ENCODE measurements at regions of chr7 and their contacts with region 1.

Region 1: DNA sequence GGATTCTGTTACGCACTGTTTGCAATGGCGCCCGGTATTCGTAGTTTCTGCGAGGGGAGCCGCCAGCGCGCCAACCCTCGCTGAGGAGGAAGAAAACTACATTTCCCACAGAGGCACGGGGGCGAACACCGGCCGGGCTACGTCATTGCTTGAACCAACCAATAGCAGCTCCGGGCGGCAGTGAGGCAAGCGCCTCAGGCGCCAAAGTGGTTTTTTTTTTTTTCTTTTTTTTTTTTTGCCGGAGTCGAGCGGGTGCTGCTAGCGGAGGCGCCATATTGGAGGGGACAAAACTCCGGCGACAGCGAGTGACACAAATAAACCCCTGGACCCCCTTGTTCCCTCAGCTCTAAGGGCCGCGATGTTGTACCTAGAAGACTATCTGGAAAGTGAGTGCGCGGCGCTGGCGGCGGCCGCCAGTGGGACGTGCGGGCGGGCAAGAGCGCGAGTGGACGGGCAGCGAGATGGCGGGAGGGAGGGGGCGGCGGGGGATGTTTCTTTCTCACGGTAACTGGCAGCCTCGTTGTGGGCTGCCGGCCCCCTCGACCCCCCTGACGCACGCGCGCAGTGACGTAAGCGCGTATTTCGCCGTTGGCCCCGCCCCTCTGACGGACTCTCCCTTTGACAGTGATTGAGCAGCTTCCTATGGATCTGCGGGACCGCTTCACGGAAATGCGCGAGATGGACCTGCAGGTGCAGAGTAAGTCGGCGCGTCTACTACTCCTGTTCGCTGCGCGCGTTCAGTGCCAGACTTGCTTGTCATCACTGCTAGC is at the start of gene ING3:
- H3K4me3 Mint-ChIP-seq: peak within 1 kb of the TSS; percentile 91
- H3K27ac Mint-ChIP-seq: peak within 1 kb of the TSS; percentile 99
- H3K4me1 Mint-ChIP-seq: peaks cover 13% of the 10 kb centered on the region
- H3K27me3 Mint-ChIP-seq: peaks cover 1% of the 10 kb centered on the region

Region 2: DNA sequence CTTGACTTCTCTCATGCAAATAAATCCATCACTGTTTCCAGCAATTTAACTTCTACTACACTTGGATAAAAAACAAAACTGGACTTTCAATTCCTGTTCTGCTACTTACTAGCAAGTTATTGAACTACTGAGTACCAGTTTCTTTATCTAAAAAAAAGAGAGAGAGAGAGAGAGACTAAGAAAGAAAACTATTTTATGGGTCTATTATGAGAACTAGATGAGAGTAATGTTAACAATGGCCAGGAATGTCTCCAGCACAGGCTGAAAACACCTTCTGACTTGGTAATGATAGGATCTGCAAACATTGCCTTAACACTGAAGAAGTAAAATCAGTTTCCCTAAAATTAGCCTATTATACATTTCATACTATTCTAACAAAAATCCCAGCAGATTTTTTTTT is 98.0 kb before region 1 on chr7:
- intact Hi-C with region 1: no loop called
- H3K4me3 Mint-ChIP-seq: no peak overlapping the region
- H3K27ac Mint-ChIP-seq: no peak overlapping the region
- H3K4me1 Mint-ChIP-seq: peaks cover 12% of the 10 kb centered on the region
- H3K27me3 Mint-ChIP-seq: peaks cover 33% of the 10 kb centered on the region

Region 3: DNA sequence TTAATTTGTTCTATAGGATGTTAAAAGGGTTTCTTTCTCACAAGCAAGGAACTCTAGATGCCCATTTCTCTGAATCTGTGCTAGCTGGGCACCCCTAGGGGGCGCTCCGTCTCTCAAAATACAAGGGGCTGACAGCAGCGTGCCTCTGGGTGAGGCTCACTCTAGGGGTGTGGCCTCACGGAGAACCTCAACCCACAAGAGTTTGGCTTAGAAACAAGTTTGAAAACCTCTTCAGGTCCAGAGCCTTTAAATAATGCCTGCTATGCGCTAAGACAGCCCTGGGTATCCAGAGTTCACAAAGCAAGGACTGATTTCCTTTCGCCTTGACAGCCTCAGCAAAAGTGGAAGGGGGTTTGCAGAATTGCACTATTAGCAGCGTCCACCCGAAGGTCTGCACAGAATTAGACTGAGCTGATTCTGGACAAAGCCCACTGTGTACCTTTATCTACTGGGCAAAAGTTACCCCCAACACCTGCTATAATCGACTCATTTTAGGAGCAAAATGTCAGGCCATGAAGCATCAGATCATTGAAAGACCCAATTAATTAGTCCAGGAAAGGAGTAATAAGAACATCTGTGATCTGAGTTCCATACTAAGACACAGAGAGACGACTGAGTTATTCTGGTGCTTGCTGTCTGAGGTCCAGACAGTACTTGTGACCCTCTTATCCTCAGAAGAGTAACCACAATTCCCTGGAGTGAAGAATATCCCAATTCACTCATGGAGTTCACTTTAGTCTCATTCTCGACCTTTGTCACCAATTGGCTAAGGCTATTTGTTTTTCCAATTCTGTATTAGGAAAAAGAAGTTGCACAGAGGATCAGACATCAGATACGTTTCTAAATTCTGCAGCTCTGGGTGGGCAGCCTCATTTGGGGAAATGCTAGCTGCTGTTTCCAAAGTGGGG is 37.2 kb after region 1 on chr7:
- intact Hi-C with region 1: loop called (anchors 5 kb)
- H3K4me3 Mint-ChIP-seq: peak overlapping the region; percentile 88
- H3K27ac Mint-ChIP-seq: peak overlapping the region; percentile 74
- H3K4me1 Mint-ChIP-seq: peaks cover 20% of the 10 kb centered on the region
- H3K27me3 Mint-ChIP-seq: peaks cover 7% of the 10 kb centered on the region

Region 4: DNA sequence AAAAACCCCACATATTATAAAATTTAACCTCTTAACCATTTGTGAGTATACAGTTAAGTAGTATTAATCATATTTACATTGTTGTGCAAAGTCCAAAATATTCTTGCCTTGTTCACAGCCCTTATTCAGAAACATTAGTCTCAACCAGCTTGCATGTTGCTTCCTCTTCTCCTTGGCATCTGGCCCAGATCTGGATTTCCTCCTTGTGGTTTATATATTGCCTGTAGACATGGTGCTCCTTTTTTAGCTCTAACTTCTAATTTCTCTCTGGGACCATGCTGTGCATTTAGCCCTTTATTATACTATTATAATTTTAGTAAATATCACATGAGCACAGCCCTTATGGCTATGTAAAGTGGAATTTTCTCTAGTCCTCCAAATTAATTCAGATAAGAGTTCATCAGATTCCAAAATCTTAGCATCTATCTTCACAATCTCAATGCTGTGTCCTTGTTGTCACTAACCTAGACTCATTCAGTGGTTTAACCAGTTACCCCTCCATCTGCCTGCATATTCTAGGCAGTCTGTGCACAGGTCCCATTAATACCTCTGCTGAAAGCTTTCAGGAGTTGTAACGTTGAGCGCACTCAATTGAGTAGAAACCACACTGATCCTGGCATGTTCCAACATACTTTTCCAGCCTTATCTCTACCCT is 45.7 kb after region 1 on chr7:
- intact Hi-C with region 1: loop called (anchors 2 kb)
- H3K4me3 Mint-ChIP-seq: peak overlapping the region; percentile 33
- H3K27ac Mint-ChIP-seq: peak overlapping the region; percentile 79
- H3K4me1 Mint-ChIP-seq: peaks cover 64% of the 10 kb centered on the region
- H3K27me3 Mint-ChIP-seq: no peaks in the 10 kb centered on the region

Region 5: DNA sequence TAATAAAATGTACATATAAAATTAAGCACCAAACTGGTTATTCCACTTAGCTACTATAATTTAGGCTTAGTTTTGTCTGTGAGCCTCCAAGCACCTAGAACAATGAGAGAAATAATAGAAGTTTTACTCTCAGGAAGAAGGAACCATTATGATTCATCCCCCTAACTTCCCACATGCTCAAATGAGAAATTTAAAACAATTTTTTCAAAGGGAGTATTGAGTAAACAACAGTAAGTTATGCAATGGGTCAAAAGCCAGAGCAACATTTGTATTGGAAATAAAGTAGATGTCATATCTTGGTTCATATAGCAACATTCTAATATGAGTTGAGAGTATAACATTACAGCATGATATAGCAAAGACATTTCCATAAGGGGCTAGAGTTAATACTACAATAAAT is 69.9 kb after region 1 on chr7:
- intact Hi-C with region 1: no loop called
- H3K4me3 Mint-ChIP-seq: no peak overlapping the region
- H3K27ac Mint-ChIP-seq: no peak overlapping the region
- H3K4me1 Mint-ChIP-seq: peaks cover 39% of the 10 kb centered on the region
- H3K27me3 Mint-ChIP-seq: no peaks in the 10 kb centered on the region

Region 6: GRCh38 chr7:121385800-121386179 is 435.1 kb after region 1 on chr7:
- intact Hi-C with region 1: loop called (anchors 10 kb)
- H3K4me3 Mint-ChIP-seq: no peak overlapping the region
- H3K27ac Mint-ChIP-seq: peak overlapping the region; percentile 47
- H3K4me1 Mint-ChIP-seq: peaks cover 11% of the 10 kb centered on the region
- H3K27me3 Mint-ChIP-seq: no peaks in the 10 kb centered on the region